ENCODE measurements at regions of chr7 and their contacts with region 1.

Region 1: DNA sequence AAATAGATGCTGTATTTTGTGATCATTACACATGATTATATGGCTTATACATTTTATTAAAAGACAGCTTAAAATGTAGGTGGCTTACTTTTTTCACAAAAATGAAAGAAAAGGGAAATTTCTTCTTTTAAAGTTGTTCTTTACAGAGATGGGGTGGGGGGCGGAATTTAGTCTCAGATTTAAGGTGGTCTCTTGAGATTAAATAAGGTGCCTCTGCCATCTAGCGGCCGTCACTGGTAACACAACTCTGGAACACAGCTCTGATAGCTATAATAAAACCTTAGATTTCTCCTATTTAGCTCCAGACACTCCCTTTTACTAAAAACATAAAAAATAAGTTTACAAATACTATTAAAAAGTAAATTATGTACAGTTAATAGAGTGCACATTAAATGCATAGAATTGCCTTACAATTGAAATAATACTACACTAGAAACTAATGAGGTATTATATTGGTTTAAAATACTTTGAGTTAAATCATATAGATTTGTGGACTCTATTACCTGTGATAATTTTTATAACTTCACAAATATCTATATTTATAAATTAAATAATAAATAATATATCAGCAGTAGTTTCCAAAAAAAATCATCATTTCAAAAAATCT is 210.9 kb downstream of the DGKB start:
- DNase-seq: no peak
- ATAC-seq: peak; percentile 68
- H3K4me3 ChIP-seq: no peak overlapping the region
- H3K27ac ChIP-seq: no peak overlapping the region
- H3K4me1 ChIP-seq: no peaks in the 10 kb centered on the region
- H3K27me3 ChIP-seq: no peaks in the 10 kb centered on the region
- CTCF ChIP-seq: peak; percentile 73 to 76 (median 75)
- EP300 ChIP-seq: no peak
- POLR2A ChIP-seq: no peak
- RAD21 ChIP-seq: peak; percentile 69

Region 2: GRCh38 chr7:13279854-13280435 is 1411.8 kb before region 1 on chr7:
- CTCF ChIA-PET with region 1: interaction called, 85 read pairs
- POLR2A ChIA-PET with region 1: no interaction called
- RAD21 ChIA-PET with region 1: interaction called, 42 read pairs
- SMC1A ChIA-PET with region 1: interaction called, 42 read pairs
- in situ Hi-C with region 1: loop called (anchors 10 kb)
- intact Hi-C with region 1: loop called (anchors 2 kb)
- DNase-seq: no peak
- ATAC-seq: no peak
- H3K4me3 ChIP-seq: no peak overlapping the region
- H3K27ac ChIP-seq: no peak overlapping the region
- H3K4me1 ChIP-seq: no peaks in the 10 kb centered on the region
- H3K27me3 ChIP-seq: no peaks in the 10 kb centered on the region
- CTCF ChIP-seq: peak in 1 of 3 experiments; percentile 20; a peak in 1 of 6 replicates
- EP300 ChIP-seq: no peak
- POLR2A ChIP-seq: no peak
- RAD21 ChIP-seq: peak; percentile 39; the same call in 1 of the 2 replicates

Region 3: GRCh38 chr7:13532028-13532753 is 1159.5 kb before region 1 on chr7:
- CTCF ChIA-PET with region 1: interaction called, 5 read pairs
- POLR2A ChIA-PET with region 1: no interaction called
- RAD21 ChIA-PET with region 1: no interaction called
- SMC1A ChIA-PET with region 1: interaction called, 3 read pairs
- in situ Hi-C with region 1: no loop called
- intact Hi-C with region 1: loop called (anchors 5 kb)
- DNase-seq: no peak
- ATAC-seq: no peak
- H3K4me3 ChIP-seq: no peak overlapping the region
- H3K27ac ChIP-seq: no peak overlapping the region
- H3K4me1 ChIP-seq: no peaks in the 10 kb centered on the region
- H3K27me3 ChIP-seq: no peaks in the 10 kb centered on the region
- CTCF ChIP-seq: no peak
- EP300 ChIP-seq: no peak
- POLR2A ChIP-seq: no peak
- RAD21 ChIP-seq: no peak

Region 4: DNA sequence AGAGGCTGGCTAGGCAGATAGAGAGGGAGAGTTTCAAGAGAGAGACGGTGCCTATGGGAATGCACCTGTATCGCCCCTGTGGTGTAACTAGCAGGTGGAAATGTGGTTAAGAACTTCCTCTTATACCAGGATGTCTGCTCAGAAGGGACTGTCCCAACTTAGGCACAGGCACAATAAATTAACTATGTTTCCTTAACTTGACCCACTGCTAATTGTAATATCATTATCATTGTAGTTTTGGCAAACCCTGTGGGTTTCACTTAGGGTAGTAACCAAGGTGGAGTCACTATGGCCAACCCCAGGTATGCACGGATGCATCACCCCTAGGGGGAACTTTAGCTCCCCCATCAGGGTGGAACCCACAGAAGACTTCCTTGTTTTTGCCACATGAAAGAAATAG is 244.9 kb before region 1 on chr7:
- CTCF ChIA-PET with region 1: no interaction called
- POLR2A ChIA-PET with region 1: no interaction called
- RAD21 ChIA-PET with region 1: no interaction called
- SMC1A ChIA-PET with region 1: no interaction called
- in situ Hi-C with region 1: no loop called
- intact Hi-C with region 1: no loop called
- DNase-seq: no peak
- ATAC-seq: peak; percentile 82
- H3K4me3 ChIP-seq: no peak overlapping the region
- H3K27ac ChIP-seq: no peak overlapping the region
- H3K4me1 ChIP-seq: no peaks in the 10 kb centered on the region
- H3K27me3 ChIP-seq: no peaks in the 10 kb centered on the region
- CTCF ChIP-seq: no peak
- EP300 ChIP-seq: no peak
- POLR2A ChIP-seq: no peak
- RAD21 ChIP-seq: no peak

Region 5: DNA sequence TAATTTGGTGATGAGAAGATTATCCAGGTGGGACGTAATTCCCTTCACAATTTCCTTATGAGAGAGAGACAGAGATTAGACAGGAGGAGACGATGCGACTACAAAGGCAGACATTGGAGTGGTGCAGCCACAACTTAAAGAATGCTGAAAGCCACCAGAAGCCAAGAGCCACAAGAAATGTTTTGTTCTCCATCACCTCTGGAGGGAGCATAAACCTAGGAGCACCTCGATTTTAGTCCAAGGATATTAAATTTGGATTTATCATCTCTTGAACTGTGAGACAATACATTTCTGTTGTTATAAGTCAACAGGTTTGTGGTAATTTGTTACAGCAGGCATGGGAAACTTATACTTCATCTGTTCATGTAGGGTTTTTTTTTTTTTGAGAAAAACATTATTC is 208.0 kb before region 1 on chr7:
- CTCF ChIA-PET with region 1: interaction called, 4 read pairs
- POLR2A ChIA-PET with region 1: no interaction called
- RAD21 ChIA-PET with region 1: interaction called, 3 read pairs
- SMC1A ChIA-PET with region 1: no interaction called
- in situ Hi-C with region 1: no loop called
- intact Hi-C with region 1: loop called (anchors 10 kb)
- DNase-seq: no peak
- ATAC-seq: no peak
- H3K4me3 ChIP-seq: no peak overlapping the region
- H3K27ac ChIP-seq: no peak overlapping the region
- H3K4me1 ChIP-seq: no peaks in the 10 kb centered on the region
- H3K27me3 ChIP-seq: no peaks in the 10 kb centered on the region
- CTCF ChIP-seq: no peak
- EP300 ChIP-seq: no peak
- POLR2A ChIP-seq: no peak
- RAD21 ChIP-seq: no peak

Region 6: DNA sequence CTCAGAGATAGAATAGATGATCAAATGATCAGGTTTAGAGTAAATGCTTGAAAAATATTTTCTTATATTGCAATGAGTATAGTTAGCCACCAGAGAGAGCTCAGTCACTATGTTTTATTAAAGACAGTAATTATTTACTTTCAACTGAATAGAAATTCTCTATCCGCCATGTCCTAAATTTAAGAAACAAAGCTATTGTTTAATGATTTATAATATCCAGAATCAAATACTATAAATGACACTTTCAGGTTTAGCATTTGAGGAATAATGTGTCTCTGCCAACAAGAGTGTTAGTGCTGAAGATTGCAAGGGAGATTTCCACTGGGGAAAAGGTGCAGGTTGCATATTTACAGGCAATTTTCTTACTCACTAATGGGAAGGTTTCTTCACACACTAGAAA is 26.1 kb after region 1 on chr7:
- CTCF ChIA-PET with region 1: interaction called, 26 read pairs
- POLR2A ChIA-PET with region 1: no interaction called
- RAD21 ChIA-PET with region 1: interaction called, 4 read pairs
- SMC1A ChIA-PET with region 1: interaction called, 16 read pairs
- in situ Hi-C with region 1: no loop called
- intact Hi-C with region 1: no loop called
- DNase-seq: no peak
- ATAC-seq: no peak
- H3K4me3 ChIP-seq: no peak overlapping the region
- H3K27ac ChIP-seq: no peak overlapping the region
- H3K4me1 ChIP-seq: no peaks in the 10 kb centered on the region
- H3K27me3 ChIP-seq: peaks cover 0 to 3% of the 10 kb centered on the region in 2 experiments; a peak in 1 of 4 replicates
- CTCF ChIP-seq: peak in 2 of 3 experiments; percentile 7 to 12; a peak in 3 of 6 replicates
- EP300 ChIP-seq: no peak
- POLR2A ChIP-seq: no peak
- RAD21 ChIP-seq: peak; percentile 49

Measured in GM12878 (cell line).